Transverse colon (tissue), 4 donors: ENCODE measurements at regions of chr13 and their contacts with region 1.

Region 1: DNA sequence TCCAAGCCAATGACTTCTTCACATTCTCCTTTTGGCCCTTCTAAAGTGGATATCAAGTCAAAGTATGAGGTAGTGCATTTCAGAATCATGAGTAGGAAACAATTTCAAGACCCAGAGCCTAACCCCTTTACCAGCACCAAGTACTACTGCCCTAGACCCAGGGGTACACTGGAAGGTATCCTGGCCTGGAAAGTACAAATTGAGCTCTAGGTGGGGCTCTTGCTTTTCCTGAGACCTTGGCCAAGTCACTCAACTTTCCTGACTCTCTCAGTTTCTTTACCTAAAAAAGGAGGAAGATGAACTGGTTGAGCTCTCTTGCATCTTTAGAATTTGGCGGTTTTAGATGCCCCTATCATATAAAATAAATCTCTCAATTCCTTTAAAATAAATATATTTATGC is 204.7 kb downstream of the FGF14 start:
- DNase-seq: no peak
- H3K4me3 ChIP-seq: no peak overlapping the region
- H3K27ac ChIP-seq: no peak overlapping the region
- H3K4me1 ChIP-seq: no peaks in the 10 kb centered on the region
- H3K27me3 ChIP-seq: no peaks in the 10 kb centered on the region
- CTCF ChIP-seq: no peak
- EP300 ChIP-seq: no peak
- POLR2A ChIP-seq: no peak

Region 2: DNA sequence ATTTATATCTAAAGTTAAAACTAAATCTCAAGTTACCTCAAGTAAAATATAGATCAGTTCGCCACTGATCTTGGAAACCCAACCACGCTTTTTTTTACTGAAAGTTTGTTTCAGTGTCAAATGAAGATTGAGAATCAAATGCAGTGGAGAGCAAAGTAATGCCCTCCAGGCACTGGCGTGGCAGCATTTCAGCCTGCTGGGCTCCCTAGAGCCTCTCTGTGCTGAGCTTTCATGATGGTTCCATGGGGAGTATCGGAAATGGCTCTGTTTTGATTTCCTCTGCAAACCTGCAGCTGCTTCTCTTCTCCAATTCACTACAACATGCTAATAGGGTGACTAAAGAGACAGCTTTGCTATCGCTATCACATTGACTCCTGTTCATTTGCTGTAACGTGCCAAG is 63.1 kb after region 1 on chr13:
- in situ Hi-C with region 1: no loop called
- intact Hi-C with region 1: no loop called
- DNase-seq: no peak
- H3K4me3 ChIP-seq: no peak overlapping the region
- H3K27ac ChIP-seq: no peak overlapping the region
- H3K4me1 ChIP-seq: no peaks in the 10 kb centered on the region
- H3K27me3 ChIP-seq: no peaks in the 10 kb centered on the region
- CTCF ChIP-seq: no peak
- EP300 ChIP-seq: no peak
- POLR2A ChIP-seq: no peak

Region 3: DNA sequence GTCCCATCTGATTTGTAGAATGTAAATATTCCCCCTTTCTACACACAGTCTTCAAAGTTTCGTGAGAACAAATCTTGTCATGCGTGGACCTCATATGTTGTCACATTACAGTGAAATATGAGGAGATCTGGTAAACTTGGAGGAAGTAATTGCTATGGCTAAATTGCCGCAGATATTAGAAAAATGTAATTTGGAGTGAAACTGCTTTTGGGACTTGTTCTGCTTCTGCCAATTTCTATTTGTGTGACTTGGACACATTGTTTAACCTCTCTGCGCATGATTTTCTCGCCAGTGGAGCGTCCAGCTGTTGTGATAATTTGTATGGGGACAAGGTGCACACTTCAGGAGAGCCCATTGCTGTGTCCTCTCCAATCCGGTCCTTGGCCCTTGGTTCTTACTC is 1562.2 kb after region 1 on chr13:
- in situ Hi-C with region 1: no loop called
- intact Hi-C with region 1: loop called (anchors 10 kb)
- DNase-seq: no peak
- H3K4me3 ChIP-seq: no peak overlapping the region
- H3K27ac ChIP-seq: no peak overlapping the region
- H3K4me1 ChIP-seq: no peaks in the 10 kb centered on the region
- H3K27me3 ChIP-seq: no peaks in the 10 kb centered on the region
- CTCF ChIP-seq: no peak
- EP300 ChIP-seq: no peak
- POLR2A ChIP-seq: no peak